Calu3 (cell line): ENCODE measurements at regions of chr3 and their contacts with region 1.

Region 1: DNA sequence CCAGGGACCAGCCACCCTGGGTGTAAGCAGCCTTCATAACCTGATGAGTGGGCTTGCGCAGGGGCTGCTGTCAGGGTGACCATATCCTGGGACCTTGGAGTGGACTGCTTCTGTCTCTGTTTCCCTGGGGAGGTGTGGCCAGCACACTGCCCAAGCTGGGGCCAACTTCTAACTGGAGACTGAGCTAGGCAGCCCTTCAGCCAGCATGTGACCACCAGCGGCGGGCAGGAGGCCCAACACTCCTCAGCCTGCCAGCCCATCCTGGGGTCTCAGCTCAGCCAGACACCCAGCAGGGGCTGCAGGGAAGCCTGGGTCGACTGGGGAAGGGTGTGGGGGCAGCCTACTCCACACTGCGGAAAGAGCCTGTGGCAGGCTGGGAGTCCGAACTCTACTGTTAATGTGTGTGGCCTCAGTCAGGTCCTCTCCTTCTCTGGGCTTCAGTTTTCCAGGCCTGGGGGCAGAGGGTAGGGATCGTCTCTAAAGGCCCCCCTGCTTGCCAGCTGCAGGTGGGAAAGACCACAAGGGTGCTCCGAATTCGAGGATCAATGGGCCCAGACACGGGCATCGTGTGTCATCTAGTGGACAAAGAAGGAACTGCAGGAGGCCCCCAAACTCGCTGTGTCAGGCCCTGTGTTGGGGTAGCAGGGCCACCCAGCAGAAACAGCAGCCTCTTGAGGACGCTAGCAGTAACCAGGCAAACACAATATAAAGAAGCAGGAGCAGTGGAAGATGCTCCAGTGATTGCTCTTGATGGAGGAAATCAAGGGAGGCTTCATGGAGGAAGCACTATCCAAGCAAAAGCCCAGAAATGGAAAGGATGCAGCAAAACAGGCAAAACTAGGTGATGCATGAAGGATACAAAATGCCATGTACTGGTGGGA is 2.0 kb upstream of the SEMA3G start:
- DNase-seq: peak; percentile 80
- H3K4me3 Mint-ChIP-seq: no peak overlapping the region
- H3K27ac Mint-ChIP-seq: no peak overlapping the region
- H3K4me1 Mint-ChIP-seq: peaks cover 26% of the 10 kb centered on the region
- H3K27me3 Mint-ChIP-seq: no peaks in the 10 kb centered on the region
- CTCF ChIP-seq: peak; percentile 95

Region 2: DNA sequence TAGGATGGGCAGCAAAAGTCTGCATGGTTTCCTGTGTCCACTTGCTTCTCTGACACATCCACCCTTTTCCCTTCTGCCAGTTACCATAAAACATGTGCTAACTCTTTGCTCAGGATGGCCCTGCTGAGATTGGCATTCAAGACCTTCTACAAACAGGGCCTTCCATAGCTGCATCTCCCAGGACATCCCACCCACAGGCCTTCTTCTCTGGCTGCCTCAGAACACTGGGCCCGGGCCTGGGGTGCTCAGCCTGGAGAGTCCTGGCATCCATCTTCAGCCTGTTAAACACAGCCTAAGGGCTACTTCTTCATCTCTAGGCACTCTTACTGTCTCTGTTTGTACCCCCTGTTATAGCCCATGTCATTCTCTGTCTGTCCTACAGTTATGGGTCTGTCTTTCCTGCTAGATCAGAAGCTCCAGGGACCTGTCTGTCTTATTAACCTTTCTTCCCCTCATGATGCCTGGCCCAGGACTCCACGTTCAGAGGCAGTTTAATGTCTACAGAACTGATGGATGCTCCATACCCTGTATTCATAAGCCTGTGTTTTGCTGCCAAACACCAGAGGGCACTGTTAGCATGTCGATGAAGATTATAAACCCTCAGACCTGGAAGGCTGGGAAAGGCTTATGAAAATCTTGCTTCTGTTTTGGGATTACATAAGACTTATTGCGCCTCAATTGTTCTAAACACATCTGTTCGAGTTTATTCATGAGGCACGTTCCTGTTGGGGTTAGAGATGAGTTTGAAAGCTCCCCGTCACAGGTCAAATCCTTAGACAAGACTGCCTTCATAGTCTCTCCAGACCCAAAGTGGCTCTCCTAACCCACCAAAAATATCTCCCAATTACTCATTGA is 18.5 kb before region 1 on chr3:
- CTCF ChIA-PET with region 1: interaction called, 20 read pairs
- intact Hi-C with region 1: loop called (anchors 1 kb)
- DNase-seq: peak; percentile 63
- H3K4me3 Mint-ChIP-seq: no peak overlapping the region
- H3K27ac Mint-ChIP-seq: no peak overlapping the region
- H3K4me1 Mint-ChIP-seq: no peaks in the 10 kb centered on the region
- H3K27me3 Mint-ChIP-seq: peaks cover 37% of the 10 kb centered on the region
- CTCF ChIP-seq: peak; percentile 35

Region 3: GRCh38 chr3:52593103-52593502 is 146.2 kb after region 1 on chr3:
- CTCF ChIA-PET with region 1: no interaction called
- intact Hi-C with region 1: no loop called
- DNase-seq: no peak
- H3K4me3 Mint-ChIP-seq: no peak overlapping the region
- H3K27ac Mint-ChIP-seq: no peak overlapping the region
- H3K4me1 Mint-ChIP-seq: no peaks in the 10 kb centered on the region
- H3K27me3 Mint-ChIP-seq: no peaks in the 10 kb centered on the region
- CTCF ChIP-seq: no peak